ENCODE measurements at regions of chr5 and their contacts with region 1.

Region 1: GRCh38 chr5:83340511-83340918 is 131.0 kb upstream of the VCAN start:
- DNase-seq: peak in 6 of 9 donors; percentile 2 to 49 (median 26)
- ATAC-seq: peak; percentile 75
- H3K4me3 ChIP-seq: no peak overlapping the region
- H3K4me3 Mint-ChIP-seq: peak overlapping the region in 4 of 10 donors; percentile 5 to 78 (median 25)
- H3K27ac ChIP-seq: no peak overlapping the region
- H3K27ac Mint-ChIP-seq: peak overlapping the region in 6 of 9 donors; percentile 23 to 81 (median 41)
- H3K4me1 ChIP-seq: peaks cover 0 to 3% of the 10 kb centered on the region in 2 donors
- H3K4me1 Mint-ChIP-seq: peaks cover 12 to 28% (median 23%) of the 10 kb centered on the region in 7 donors
- H3K27me3 ChIP-seq: no peaks in the 10 kb centered on the region
- H3K27me3 Mint-ChIP-seq: no peaks in the 10 kb centered on the region

Region 2: DNA sequence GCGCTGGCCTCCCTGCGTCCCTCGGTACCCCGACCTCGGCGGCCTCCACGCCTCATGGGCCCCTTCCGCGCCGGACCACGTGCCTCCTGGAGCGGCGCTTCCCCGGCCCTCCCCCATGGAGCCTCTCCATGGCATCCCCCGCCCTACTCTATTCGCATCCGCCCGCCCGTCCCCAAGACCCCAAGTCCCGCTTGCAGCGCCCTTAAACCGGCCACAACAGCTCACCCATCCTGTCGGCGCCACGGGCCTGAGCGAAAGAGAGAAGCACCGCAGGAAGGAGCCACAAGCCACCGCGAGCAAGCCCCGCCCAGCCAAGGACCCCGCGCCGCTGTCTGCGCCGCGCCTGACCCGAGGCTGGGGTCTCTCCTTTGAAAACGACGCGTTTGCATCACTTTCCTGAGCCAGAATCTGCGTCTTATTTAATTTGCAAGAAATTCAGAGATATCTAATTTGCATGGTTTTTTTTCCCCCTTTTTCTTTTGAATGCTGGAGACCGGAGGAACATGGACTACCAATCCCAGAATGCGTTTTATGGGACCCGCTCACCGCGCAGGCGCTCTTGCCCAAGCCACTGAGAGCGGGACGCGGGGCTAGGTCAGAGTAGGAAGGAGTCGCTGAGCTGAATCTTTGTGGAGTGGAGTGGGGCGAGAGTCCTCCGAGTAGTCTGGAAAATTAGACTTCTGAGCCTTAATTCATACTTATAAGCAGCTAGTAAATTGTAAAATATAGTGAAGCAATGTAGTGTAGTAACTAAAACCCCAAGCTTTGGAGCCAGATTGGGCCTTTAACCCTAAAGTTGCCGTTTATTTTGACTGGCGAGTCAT is 1062.2 kb before region 1 on chr5 and contains the start of gene RPS23:
- CTCF ChIA-PET with region 1: no interaction called
- POLR2A ChIA-PET with region 1: no interaction called
- intact Hi-C with region 1: loop called in 1 of 2 experiments (anchors 10 kb)
- DNase-seq: peak; percentile 78 to 90 (median 85)
- ATAC-seq: peak; percentile 96
- H3K4me3 ChIP-seq: peak within 1 kb of the TSS; percentile 72
- H3K4me3 Mint-ChIP-seq: peak within 1 kb of the TSS; percentile 87 to 98 (median 94)
- H3K27ac ChIP-seq: peak within 1 kb of the TSS; percentile 80
- H3K27ac Mint-ChIP-seq: peak within 1 kb of the TSS; percentile 94 to 99 (median 96)
- H3K4me1 ChIP-seq: peaks cover 12 to 16% of the 10 kb centered on the region in 2 donors
- H3K4me1 Mint-ChIP-seq: peaks cover 13 to 65% (median 39%) of the 10 kb centered on the region in 7 donors
- H3K27me3 ChIP-seq: no peaks in the 10 kb centered on the region
- H3K27me3 Mint-ChIP-seq: no peaks in the 10 kb centered on the region
- total RNA-seq, gene RPS23: 2,233 to 4,335 (median 3,874) TPM

Region 3: GRCh38 chr5:83467371-83468035 is 127.0 kb after region 1 on chr5:
- CTCF ChIA-PET with region 1: no interaction called
- POLR2A ChIA-PET with region 1: no interaction called
- intact Hi-C with region 1: no loop called
- DNase-seq: no peak
- ATAC-seq: no peak
- H3K4me3 ChIP-seq: no peak overlapping the region
- H3K4me3 Mint-ChIP-seq: no peak overlapping the region
- H3K27ac ChIP-seq: no peak overlapping the region
- H3K27ac Mint-ChIP-seq: no peak overlapping the region
- H3K4me1 ChIP-seq: peaks cover 0 to 4% of the 10 kb centered on the region in 2 donors
- H3K4me1 Mint-ChIP-seq: peaks cover 7 to 17% (median 11%) of the 10 kb centered on the region in 7 donors
- H3K27me3 ChIP-seq: no peaks in the 10 kb centered on the region
- H3K27me3 Mint-ChIP-seq: peaks cover 57 to 73% (median 72%) of the 10 kb centered on the region in 5 donors

Region 4: GRCh38 chr5:84794486-84795035 is 1454.0 kb after region 1 on chr5:
- CTCF ChIA-PET with region 1: no interaction called
- POLR2A ChIA-PET with region 1: no interaction called
- intact Hi-C with region 1: no loop called
- DNase-seq: no peak
- ATAC-seq: no peak
- H3K4me3 ChIP-seq: no peak overlapping the region
- H3K4me3 Mint-ChIP-seq: no peak overlapping the region
- H3K27ac ChIP-seq: no peak overlapping the region
- H3K27ac Mint-ChIP-seq: no peak overlapping the region
- H3K4me1 ChIP-seq: no peaks in the 10 kb centered on the region
- H3K4me1 Mint-ChIP-seq: no peaks in the 10 kb centered on the region
- H3K27me3 ChIP-seq: no peaks in the 10 kb centered on the region
- H3K27me3 Mint-ChIP-seq: no peaks in the 10 kb centered on the region